A549 (cell line): ENCODE measurements at regions of chr1 and their contacts with region 1.

Region 1: GRCh38 chr1:167066333-167067122 is 23.6 kb downstream of the GPA33 start:
- DNase-seq: peak; percentile 45 to 86
- ATAC-seq: peak; percentile 89 to 98
- H3K4me3 ChIP-seq: peak overlapping the region; percentile 40
- H3K27ac ChIP-seq: peak overlapping the region; percentile 65 to 82
- H3K4me1 ChIP-seq: no peaks in the 10 kb centered on the region
- CTCF ChIP-seq: peak; percentile 97
- EP300 ChIP-seq: no peak
- POLR2A ChIP-seq: no peak
- RAD21 ChIP-seq: peak; percentile 96 to 99

Region 2: GRCh38 chr1:167082511-167083027 is 16.0 kb after region 1 on chr1:
- CTCF ChIA-PET with region 1: interaction called, 10 read pairs
- POLR2A ChIA-PET with region 1: no interaction called
- DNase-seq: peak; percentile 65 to 77
- ATAC-seq: peak; percentile 90 to 92
- H3K4me3 ChIP-seq: no peak overlapping the region
- H3K27ac ChIP-seq: peak overlapping the region; percentile 44 to 77; a peak in 5 of 6 replicates
- H3K4me1 ChIP-seq: peaks cover 15% of the 10 kb centered on the region
- CTCF ChIP-seq: no peak
- EP300 ChIP-seq: no peak
- POLR2A ChIP-seq: no peak
- RAD21 ChIP-seq: no peak

Region 3: GRCh38 chr1:167121375-167122120 is 55.0 kb after region 1 on chr1:
- CTCF ChIA-PET with region 1: interaction called, 24 read pairs
- POLR2A ChIA-PET with region 1: no interaction called
- DNase-seq: peak; percentile 58
- ATAC-seq: peak; percentile 71 to 87
- H3K4me3 ChIP-seq: peak overlapping the region; percentile 53
- H3K27ac ChIP-seq: peak overlapping the region; percentile 60 to 85
- H3K4me1 ChIP-seq: no peaks in the 10 kb centered on the region; the same call in 2 of the 3 replicates
- CTCF ChIP-seq: no peak
- EP300 ChIP-seq: no peak
- POLR2A ChIP-seq: no peak
- RAD21 ChIP-seq: no peak

Region 4: DNA sequence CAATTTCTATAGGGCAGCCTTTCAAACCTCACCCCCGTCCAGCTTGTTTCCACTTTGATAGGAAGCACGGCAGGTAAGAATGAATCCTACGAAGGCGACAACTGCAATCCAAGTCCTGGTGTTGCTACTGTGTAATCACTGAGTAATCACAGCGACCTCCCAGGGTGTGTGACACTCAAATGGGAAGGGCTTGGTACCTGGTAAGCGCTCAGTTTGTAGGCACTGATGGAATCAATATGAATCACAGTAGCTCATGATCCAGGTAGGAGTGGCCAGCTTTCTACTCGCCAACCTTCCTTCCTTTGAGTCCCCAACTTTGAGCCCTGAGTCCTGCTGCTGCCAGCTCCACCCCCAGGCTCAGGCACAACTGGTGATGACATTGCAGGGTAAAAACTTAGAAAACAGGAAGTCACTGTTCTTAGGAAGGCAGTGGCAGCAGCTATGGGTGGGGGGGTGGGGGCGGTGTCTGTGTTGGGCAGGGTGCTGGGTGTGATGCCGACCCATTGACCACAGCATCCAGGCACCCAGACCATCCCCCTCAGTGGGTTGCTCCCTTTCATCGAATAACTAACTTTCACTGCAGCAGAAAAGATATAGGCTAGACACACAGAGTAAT is 381.1 kb after region 1 on chr1:
- CTCF ChIA-PET with region 1: interaction called, 20 read pairs
- POLR2A ChIA-PET with region 1: no interaction called
- DNase-seq: peak; percentile 24 to 61
- ATAC-seq: peak; percentile 59 to 85
- H3K4me3 ChIP-seq: no peak overlapping the region
- H3K27ac ChIP-seq: peak overlapping the region; percentile 34 to 56; a peak in 5 of 6 replicates
- H3K4me1 ChIP-seq: peaks cover 14% of the 10 kb centered on the region
- CTCF ChIP-seq: no peak
- EP300 ChIP-seq: no peak
- POLR2A ChIP-seq: no peak
- RAD21 ChIP-seq: no peak